Activated CD4-positive, alpha-beta T cell treated with anti-CD3 and anti-CD28 coated beads for 36 hours (primary cell): ENCODE measurements at regions of chr1 and their contacts with region 1.

Region 1: GRCh38 chr1:34984793-34985608 is at the start of gene TMEM35B:
- DNase-seq: peak; percentile 88
- ATAC-seq: peak; percentile 94
- H3K4me3 Mint-ChIP-seq: peak within 1 kb of the TSS; percentile 93
- H3K27ac Mint-ChIP-seq: peak within 1 kb of the TSS; percentile 93
- H3K4me1 Mint-ChIP-seq: peaks cover 43% of the 10 kb centered on the region
- H3K27me3 Mint-ChIP-seq: no peaks in the 10 kb centered on the region
- total RNA-seq, gene TMEM35B: 15.8 to 19.0 TPM

Region 2: GRCh38 chr1:34859446-34860200 is 125.4 kb before region 1 on chr1 and contains the start of gene SMIM12:
- CTCF ChIA-PET with region 1: interaction called, 4 read pairs
- POLR2A ChIA-PET with region 1: no interaction called
- intact Hi-C with region 1: loop called in 1 of 2 experiments (anchors 1 kb)
- DNase-seq: peak; percentile 95
- ATAC-seq: peak; percentile 95
- H3K4me3 Mint-ChIP-seq: peak within 1 kb of the TSS; percentile 98
- H3K27ac Mint-ChIP-seq: peak within 1 kb of the TSS; percentile 99
- H3K4me1 Mint-ChIP-seq: peaks cover 51% of the 10 kb centered on the region
- H3K27me3 Mint-ChIP-seq: no peaks in the 10 kb centered on the region
- total RNA-seq, gene SMIM12: 42.4 to 45.0 TPM

Region 3: GRCh38 chr1:35180776-35181374 is 195.9 kb after region 1 on chr1:
- CTCF ChIA-PET with region 1: no interaction called
- POLR2A ChIA-PET with region 1: interaction called, 7 read pairs
- intact Hi-C with region 1: loop called in 1 of 2 experiments (anchors 10 kb)
- DNase-seq: peak; percentile 36
- ATAC-seq: peak; percentile 84
- H3K4me3 Mint-ChIP-seq: peak overlapping the region; percentile 7
- H3K27ac Mint-ChIP-seq: peak overlapping the region; percentile 68
- H3K4me1 Mint-ChIP-seq: peaks cover 76% of the 10 kb centered on the region
- H3K27me3 Mint-ChIP-seq: no peaks in the 10 kb centered on the region

Region 4: DNA sequence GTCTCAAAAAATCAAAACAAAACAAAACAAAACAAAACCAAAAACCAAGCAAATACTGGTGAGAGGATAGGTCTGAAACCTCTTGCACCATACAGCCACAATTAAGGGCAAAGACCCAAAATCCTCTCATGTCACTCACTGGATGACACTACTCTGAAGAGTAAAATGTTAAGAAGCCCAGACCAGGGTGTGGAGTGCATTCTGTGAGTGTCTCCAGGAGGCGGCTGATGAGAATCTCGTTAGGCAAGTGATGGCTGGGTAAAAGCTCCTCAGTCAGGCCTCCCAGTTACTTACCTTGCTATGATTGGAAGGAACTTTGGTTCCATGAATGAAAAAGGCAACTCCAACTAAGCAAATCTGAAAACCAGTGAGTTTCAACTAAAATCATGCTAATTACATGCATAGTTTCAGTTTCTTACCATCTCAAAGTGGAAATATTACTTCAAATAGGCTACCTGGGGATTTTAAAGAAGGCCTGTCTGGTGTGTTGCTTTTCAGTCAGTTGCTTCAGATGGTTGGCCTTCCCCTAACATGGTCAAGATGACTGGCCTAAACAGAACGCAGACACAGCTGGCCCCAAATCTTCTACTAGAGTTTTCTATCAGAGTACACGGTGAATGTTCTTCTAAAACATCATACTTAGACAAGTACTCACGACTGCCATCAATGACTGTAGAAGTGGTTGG is 477.1 kb after region 1 on chr1:
- CTCF ChIA-PET with region 1: no interaction called
- POLR2A ChIA-PET with region 1: no interaction called
- intact Hi-C with region 1: no loop called
- DNase-seq: peak; percentile 37
- ATAC-seq: peak; percentile 84
- H3K4me3 Mint-ChIP-seq: peak overlapping the region; percentile 20
- H3K27ac Mint-ChIP-seq: peak overlapping the region; percentile 88
- H3K4me1 Mint-ChIP-seq: peaks cover 13% of the 10 kb centered on the region
- H3K27me3 Mint-ChIP-seq: no peaks in the 10 kb centered on the region